Endothelial cell of umbilical vein (primary cell): ENCODE measurements at regions of chr2 and their contacts with region 1.

Region 1: GRCh38 chr2:138122142-138123003 is 158.1 kb downstream of the HNMT start:
- DNase-seq: peak; percentile 24
- H3K4me3 ChIP-seq: no peak overlapping the region
- H3K27ac ChIP-seq: no peak overlapping the region
- H3K4me1 ChIP-seq: no peaks in the 10 kb centered on the region
- H3K27me3 ChIP-seq: no peaks in the 10 kb centered on the region
- CTCF ChIP-seq: no peak
- POLR2A ChIP-seq: no peak

Region 2: DNA sequence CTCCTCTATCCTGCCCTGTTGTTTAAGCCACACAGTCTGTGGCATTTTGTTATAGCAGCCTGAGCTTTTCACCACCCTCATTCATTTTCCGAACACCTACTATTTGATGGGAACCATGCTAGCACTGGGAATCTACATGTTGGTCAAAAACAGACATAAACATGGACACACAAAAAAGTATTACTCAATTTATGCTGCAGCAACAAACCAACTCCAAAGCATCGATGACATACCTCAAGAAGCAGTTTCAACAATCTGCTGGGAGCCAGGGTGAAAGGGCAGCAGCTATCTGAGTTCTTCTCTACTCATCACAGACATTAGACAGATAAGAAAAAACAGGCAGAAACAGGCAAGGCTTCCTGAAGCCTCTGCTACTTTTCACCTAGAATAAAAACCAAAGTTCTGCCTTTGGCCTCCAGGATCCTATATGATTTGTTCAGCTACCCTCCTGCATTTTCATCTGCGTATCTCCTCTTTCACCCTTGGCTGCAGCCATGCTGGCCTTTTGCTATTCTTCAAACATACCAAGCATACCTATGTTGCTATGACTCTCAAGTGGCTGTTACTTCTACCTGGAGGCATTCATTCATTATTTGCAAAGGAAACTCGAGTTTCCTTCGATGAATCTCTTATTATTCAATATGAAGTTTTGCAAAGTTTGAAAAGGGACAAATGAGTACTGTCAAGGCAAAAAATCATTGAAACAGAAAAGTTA is 264.6 kb before region 1 on chr2:
- CTCF ChIA-PET with region 1: no interaction called
- POLR2A ChIA-PET with region 1: no interaction called
- dilution Hi-C with region 1: no loop called
- intact Hi-C with region 1: no loop called
- DNase-seq: no peak
- H3K4me3 ChIP-seq: no peak overlapping the region
- H3K27ac ChIP-seq: no peak overlapping the region
- H3K4me1 ChIP-seq: no peaks in the 10 kb centered on the region
- H3K27me3 ChIP-seq: no peaks in the 10 kb centered on the region
- CTCF ChIP-seq: no peak
- POLR2A ChIP-seq: no peak

Region 3: GRCh38 chr2:138081225-138082073 is 40.9 kb before region 1 on chr2:
- CTCF ChIA-PET with region 1: no interaction called
- POLR2A ChIA-PET with region 1: no interaction called
- dilution Hi-C with region 1: no loop called
- intact Hi-C with region 1: loop called (anchors 1 kb)
- DNase-seq: no peak
- H3K4me3 ChIP-seq: no peak overlapping the region
- H3K27ac ChIP-seq: no peak overlapping the region
- H3K4me1 ChIP-seq: no peaks in the 10 kb centered on the region
- H3K27me3 ChIP-seq: no peaks in the 10 kb centered on the region
- CTCF ChIP-seq: no peak
- POLR2A ChIP-seq: no peak